Tibial artery (tissue), 4 donors: ENCODE measurements at regions of chr19 and their contacts with region 1.

Region 1: GRCh38 chr19:48290771-48291488 is 21.0 kb downstream of the ZNF114 start:
- DNase-seq: peak; percentile 75 to 85
- H3K4me3 ChIP-seq: peak overlapping the region; percentile 31 to 51
- H3K27ac ChIP-seq: no peak overlapping the region
- H3K4me1 ChIP-seq: peaks cover 0 to 14% (median 10%) of the 10 kb centered on the region in 4 donors
- H3K27me3 ChIP-seq: peaks cover 0 to 27% of the 10 kb centered on the region in 2 donors
- CTCF ChIP-seq: peak; percentile 93 to 98

Region 2: DNA sequence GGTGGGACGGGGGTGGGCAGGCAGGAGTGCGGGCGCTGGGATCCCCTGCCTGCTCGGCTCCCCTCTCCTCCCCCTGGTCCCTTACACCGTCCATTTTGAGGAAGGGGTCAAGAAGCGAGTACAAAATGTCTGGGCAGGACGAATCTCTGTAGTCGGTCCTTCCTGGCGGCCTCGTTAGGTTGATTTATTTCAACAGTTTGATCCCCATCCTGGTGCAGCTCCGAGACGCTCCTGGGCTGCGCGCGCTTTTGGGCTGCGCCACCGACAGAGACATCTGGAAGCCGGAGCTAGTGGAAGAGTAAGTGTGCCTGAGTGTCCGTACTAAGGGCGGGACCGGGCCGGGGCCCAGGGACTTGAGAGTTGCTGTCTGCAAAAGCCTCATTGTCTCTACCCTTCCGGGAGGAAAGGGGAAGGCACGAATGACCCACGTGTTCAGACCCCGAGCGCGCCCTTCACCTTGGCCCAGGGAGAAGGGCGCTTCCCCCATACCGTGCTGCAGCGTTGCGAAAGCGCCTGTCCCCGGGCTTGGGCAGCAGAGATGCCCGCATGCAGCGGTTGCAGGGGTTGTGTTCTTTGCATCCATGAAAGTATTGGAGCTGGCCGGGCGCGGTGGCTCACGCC is 19.3 kb before region 1 on chr19:
- intact Hi-C with region 1: loop called (anchors 1 kb)
- DNase-seq: peak in 1 of 2 donors; percentile 31
- H3K4me3 ChIP-seq: peak overlapping the region; percentile 19 to 38
- H3K27ac ChIP-seq: no peak overlapping the region
- H3K4me1 ChIP-seq: peaks cover 0 to 17% (median 11%) of the 10 kb centered on the region in 4 donors
- H3K27me3 ChIP-seq: peaks cover 0 to 33% of the 10 kb centered on the region in 2 donors
- CTCF ChIP-seq: no peak

Region 3: GRCh38 chr19:48419158-48419920 is 128.4 kb after region 1 on chr19:
- intact Hi-C with region 1: no loop called
- DNase-seq: peak in 1 of 2 donors; percentile 47
- H3K4me3 ChIP-seq: no peak overlapping the region
- H3K27ac ChIP-seq: no peak overlapping the region
- H3K4me1 ChIP-seq: peaks cover 0 to 11% (median 6%) of the 10 kb centered on the region in 4 donors
- H3K27me3 ChIP-seq: peaks cover 0 to 33% of the 10 kb centered on the region in 2 donors
- CTCF ChIP-seq: no peak